ENCODE measurements at regions of chr20 and their contacts with region 1.

Region 1: DNA sequence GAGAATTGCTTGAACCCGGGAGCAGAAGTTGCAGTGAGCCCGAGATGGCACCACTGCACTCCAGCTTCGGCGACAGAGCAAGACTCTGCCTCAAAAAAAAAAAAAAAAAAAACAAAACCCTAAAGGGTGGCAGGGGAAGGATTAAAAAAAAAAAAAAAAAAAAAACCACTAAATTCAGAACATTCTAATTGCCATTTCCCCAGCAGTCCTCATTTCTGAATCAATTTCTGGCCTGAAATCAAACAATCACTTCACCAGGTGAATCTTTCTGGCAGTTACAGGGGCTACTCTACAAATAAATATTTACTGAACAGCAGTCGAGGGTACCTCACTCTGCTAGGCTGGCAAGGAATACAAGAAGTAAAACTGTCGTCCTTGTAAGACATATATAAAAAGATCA is 1.2 kb downstream of the UQCC1 start:
- DNase-seq: no peak
- H3K4me3 Mint-ChIP-seq: peak overlapping the region; percentile 94
- H3K27ac Mint-ChIP-seq: peak overlapping the region; percentile 49
- H3K4me1 Mint-ChIP-seq: peaks cover 11% of the 10 kb centered on the region
- H3K27me3 Mint-ChIP-seq: no peaks in the 10 kb centered on the region

Region 2: DNA sequence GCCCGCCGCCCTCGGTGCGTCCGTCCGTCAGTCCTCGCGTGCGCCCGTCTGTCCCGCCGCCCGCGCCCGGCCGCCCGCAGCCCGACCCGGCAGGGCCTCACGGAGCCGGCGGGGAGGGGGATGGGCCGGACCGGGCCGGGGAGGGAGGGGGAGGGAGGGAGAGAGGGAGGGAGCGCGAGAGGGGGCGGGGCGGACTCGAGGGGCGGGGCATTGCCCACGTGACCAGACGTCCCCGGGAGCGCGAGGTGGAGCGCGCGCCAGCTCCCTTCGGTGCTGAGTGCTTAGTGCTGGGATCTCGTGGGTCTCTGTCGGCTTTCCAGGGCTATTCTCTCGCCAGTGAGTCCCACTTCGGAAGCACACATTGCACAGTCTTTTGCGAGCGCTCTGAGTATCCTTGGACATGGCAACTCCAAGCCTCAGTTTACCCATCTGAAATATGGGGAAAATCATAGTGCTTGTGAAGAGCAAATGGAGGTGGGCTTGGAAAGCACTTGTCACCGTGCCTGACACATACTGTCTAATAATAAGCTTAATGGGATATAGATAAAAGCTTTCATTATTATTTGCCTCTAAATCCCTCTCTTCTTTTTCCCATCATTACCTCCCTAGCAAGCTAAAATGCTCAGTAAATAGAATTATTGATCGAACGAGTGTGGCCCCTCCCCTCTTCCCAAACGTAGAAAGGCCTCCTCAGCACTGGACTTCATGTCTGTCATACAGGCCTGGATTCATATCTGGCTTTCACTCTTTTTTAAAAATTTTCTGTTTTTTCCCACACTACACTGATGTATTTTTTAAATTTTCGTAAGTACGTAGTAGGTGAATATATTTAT is 584.9 kb before region 1 on chr20 and contains the start of gene NCOA6:
- intact Hi-C with region 1: loop called (anchors 10 kb)
- DNase-seq: peak; percentile 72
- H3K4me3 Mint-ChIP-seq: peak within 1 kb of the TSS; percentile 98
- H3K27ac Mint-ChIP-seq: peak within 1 kb of the TSS; percentile 94
- H3K4me1 Mint-ChIP-seq: peaks cover 29% of the 10 kb centered on the region
- H3K27me3 Mint-ChIP-seq: peaks cover 11% of the 10 kb centered on the region
- total RNA-seq, gene NCOA6: 29.1 and 30.9 TPM in 2 replicates

Region 3: DNA sequence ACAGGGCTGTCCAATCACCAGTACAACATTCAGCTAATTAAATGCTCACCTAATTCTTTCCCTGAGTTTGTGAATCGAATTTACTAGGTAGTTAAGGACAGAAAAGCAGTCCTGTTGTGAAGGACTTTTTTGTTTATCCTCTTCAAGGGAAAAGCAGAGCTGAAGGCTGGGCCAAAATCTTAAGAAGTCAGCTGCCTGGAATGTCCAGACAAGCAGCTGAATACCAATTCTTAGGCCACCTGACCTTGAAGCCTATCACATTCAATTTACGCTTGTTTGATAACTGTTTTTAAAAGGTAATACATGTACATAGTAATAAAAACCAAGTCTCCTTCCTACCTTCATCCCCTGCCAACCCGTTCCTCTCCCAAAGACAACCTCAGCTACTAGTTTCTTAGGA is 55.2 kb before region 1 on chr20:
- intact Hi-C with region 1: no loop called
- DNase-seq: no peak
- H3K4me3 Mint-ChIP-seq: no peak overlapping the region
- H3K27ac Mint-ChIP-seq: no peak overlapping the region
- H3K4me1 Mint-ChIP-seq: peaks cover 1% of the 10 kb centered on the region
- H3K27me3 Mint-ChIP-seq: no peaks in the 10 kb centered on the region

Region 4: DNA sequence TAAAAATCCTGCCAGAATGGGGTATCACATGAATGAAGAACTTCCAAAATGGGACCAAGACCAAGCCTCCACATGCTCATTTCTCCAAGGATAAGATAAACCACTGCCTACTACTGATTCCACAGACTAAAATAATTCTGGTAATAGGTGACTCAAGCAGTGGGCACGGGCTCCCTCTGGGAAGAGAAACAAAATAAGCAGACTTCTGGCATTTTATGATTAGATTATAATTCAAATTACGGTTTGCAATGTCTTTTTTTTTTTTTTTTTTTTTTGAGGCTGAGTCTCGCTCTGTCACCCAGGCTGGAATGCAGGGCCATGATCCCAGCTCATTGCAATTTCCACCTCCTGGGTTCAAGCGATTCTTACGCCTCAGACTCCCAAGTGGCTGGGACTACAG is 14.9 kb before region 1 on chr20:
- intact Hi-C with region 1: no loop called
- DNase-seq: no peak
- H3K4me3 Mint-ChIP-seq: no peak overlapping the region
- H3K27ac Mint-ChIP-seq: no peak overlapping the region
- H3K4me1 Mint-ChIP-seq: no peaks in the 10 kb centered on the region
- H3K27me3 Mint-ChIP-seq: no peaks in the 10 kb centered on the region

Region 5: DNA sequence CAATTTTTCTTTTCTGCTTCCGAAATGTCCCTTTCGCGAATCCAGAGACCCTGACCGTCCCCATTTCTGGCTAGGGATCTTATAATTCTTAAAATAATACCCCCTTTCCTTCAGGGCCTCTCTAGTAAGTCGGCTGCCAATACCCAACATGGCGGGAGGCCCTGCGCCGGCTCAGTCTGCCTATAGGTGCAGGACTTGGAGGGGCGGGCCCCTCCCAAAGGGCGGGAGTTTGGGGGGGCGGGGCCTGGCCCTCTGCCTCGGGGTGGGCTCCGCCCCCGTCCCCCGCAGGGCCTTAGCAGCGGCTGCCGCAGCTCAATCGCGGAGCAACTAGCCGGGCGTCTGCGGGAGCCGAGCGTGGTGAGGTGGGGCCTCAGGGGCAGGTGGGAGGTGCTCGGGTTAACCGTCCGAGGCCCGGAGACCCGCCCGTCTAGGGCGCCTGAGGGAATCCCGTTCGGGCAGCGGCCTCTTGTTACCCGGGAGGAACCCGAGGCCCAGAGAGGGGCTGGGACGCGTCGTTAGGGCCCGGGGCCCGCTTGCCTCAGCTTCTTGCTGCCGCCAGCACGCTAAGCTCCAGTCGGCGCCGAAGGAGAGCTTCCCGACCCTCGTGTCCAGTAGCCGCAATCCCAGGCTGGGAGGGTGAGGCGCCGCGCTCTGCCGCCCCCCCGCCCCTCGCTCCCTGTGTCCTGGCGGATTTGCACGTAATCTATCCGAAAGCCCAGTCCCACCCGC is 44.4 kb after region 1 on chr20 and contains the start of gene CEP250:
- intact Hi-C with region 1: loop called (anchors 5 kb)
- DNase-seq: peak; percentile 89
- H3K4me3 Mint-ChIP-seq: peak within 1 kb of the TSS; percentile 88
- H3K27ac Mint-ChIP-seq: peak within 1 kb of the TSS; percentile 98
- H3K4me1 Mint-ChIP-seq: peaks cover 18% of the 10 kb centered on the region
- H3K27me3 Mint-ChIP-seq: no peaks in the 10 kb centered on the region
- total RNA-seq, gene CEP250: 51.0 and 54.6 TPM in 2 replicates

Region 6: DNA sequence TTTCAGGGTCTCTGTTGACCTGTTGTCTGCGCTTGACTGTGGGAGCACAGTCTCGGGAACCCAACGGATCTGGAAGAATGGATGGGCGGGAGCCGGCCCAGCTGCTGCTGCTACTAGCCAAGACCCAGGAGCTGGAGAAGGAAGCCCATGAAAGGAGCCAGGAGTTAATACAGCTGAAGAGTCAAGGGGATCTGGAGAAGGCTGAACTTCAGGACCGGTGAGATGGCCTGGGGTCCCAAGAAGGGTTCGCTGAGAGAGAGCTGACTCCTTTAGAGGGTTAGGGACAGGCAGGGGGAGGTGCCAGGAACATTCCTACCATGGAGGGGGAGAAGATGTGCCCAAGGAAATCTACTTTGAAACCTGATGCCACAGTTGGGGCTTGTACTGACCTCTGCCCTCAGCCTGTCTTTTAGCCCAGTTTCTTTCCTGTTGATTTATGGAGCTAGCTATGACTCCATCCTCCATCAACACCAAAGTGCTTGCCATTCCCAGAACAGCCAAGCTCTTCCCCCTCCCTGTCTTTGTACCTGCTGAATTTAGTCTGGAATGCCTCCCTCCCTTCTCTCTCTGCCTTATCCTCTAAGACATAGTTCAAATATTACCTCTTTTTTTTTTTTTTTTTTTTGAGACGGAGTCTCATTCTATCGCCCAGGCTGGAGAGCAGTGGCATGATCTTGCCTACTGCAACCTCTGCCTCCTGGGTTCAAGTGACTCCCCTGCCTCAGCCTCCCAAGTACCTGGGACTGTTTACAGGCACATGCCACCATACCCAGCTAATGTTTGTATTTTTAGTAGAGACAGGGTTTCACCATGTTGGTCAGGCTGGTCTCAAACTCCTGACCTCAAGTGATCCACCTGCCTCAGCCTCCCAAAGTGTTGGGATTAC is 57.0 kb after region 1 on chr20:
- intact Hi-C with region 1: no loop called
- DNase-seq: no peak
- H3K4me3 Mint-ChIP-seq: no peak overlapping the region
- H3K27ac Mint-ChIP-seq: no peak overlapping the region
- H3K4me1 Mint-ChIP-seq: peaks cover 4% of the 10 kb centered on the region
- H3K27me3 Mint-ChIP-seq: no peaks in the 10 kb centered on the region

Measured in activated T-helper 2 cell treated with anti-CD3 and anti-CD28 coated beads, Interferon-gamma antibody, Interleukin-2, Interleukin-4, amounts not matched to agents 10 μg/mL and 5 μg/mL and 100 μg/mL, durations not matched to agents 14 hours and 24 hours and 36 hours (primary cell).